ENCODE measurements at regions of chr12 and their contacts with region 1.

Region 1: GRCh38 chr12:68617160-68617926 is 6.6 kb downstream of the RAP1B start:
- DNase-seq: peak; percentile 34
- H3K4me3 Mint-ChIP-seq: peak overlapping the region; percentile 6
- H3K27ac Mint-ChIP-seq: peak overlapping the region; percentile 82
- H3K4me1 Mint-ChIP-seq: peaks cover 84% of the 10 kb centered on the region
- H3K27me3 Mint-ChIP-seq: no peaks in the 10 kb centered on the region

Region 2: DNA sequence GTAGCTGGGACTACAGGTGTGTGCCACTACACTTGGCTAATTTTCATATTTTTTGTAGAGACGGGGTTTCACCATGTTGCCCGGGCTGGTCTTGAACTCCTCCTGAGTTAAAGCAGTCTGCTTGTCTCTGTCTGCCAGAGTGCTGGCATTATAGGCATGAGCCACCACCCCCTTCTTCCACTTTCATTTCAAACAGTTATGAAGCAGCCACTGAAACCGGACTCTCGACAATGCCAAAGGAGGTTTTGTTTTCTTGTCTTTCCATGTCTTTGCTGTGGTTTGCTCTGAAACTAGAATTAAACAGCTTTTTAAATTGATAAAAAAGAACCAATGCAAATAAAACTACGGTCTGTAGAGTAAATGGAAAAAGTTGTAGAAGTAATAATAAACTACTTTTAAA is 23.8 kb after region 1 on chr12:
- CTCF ChIA-PET with region 1: interaction called, 11 read pairs
- intact Hi-C with region 1: loop called (anchors 2 kb)
- DNase-seq: peak; percentile 75
- H3K4me3 Mint-ChIP-seq: peak overlapping the region; percentile 21
- H3K27ac Mint-ChIP-seq: peak overlapping the region; percentile 50
- H3K4me1 Mint-ChIP-seq: peaks cover 88% of the 10 kb centered on the region
- H3K27me3 Mint-ChIP-seq: no peaks in the 10 kb centered on the region

Region 3: GRCh38 chr12:68856510-68856909 is 239.2 kb after region 1 on chr12:
- CTCF ChIA-PET with region 1: no interaction called
- intact Hi-C with region 1: no loop called
- DNase-seq: no peak
- H3K4me3 Mint-ChIP-seq: no peak overlapping the region
- H3K27ac Mint-ChIP-seq: no peak overlapping the region
- H3K4me1 Mint-ChIP-seq: peaks cover 18% of the 10 kb centered on the region
- H3K27me3 Mint-ChIP-seq: no peaks in the 10 kb centered on the region

Measured in activated naive CD4-positive, alpha-beta T cell treated with anti-CD3 and anti-CD28 coated beads for 36 hours (primary cell).